Lower leg skin (tissue), 4 donors: ENCODE measurements at regions of chr11 and their contacts with region 1.

Region 1: GRCh38 chr11:83713701-83714100 is 427.5 kb upstream of the CCDC90B start:
- DNase-seq: no peak
- H3K4me3 ChIP-seq: no peak overlapping the region
- CTCF ChIP-seq: no peak
- POLR2A ChIP-seq: no peak

Region 2: GRCh38 chr11:83292709-83293456 is 420.8 kb before region 1 on chr11:
- intact Hi-C with region 1: loop called (anchors 10 kb)
- DNase-seq: no peak
- H3K4me3 ChIP-seq: no peak overlapping the region
- CTCF ChIP-seq: peak in 1 of 3 donors; percentile 23
- POLR2A ChIP-seq: no peak

Region 3: DNA sequence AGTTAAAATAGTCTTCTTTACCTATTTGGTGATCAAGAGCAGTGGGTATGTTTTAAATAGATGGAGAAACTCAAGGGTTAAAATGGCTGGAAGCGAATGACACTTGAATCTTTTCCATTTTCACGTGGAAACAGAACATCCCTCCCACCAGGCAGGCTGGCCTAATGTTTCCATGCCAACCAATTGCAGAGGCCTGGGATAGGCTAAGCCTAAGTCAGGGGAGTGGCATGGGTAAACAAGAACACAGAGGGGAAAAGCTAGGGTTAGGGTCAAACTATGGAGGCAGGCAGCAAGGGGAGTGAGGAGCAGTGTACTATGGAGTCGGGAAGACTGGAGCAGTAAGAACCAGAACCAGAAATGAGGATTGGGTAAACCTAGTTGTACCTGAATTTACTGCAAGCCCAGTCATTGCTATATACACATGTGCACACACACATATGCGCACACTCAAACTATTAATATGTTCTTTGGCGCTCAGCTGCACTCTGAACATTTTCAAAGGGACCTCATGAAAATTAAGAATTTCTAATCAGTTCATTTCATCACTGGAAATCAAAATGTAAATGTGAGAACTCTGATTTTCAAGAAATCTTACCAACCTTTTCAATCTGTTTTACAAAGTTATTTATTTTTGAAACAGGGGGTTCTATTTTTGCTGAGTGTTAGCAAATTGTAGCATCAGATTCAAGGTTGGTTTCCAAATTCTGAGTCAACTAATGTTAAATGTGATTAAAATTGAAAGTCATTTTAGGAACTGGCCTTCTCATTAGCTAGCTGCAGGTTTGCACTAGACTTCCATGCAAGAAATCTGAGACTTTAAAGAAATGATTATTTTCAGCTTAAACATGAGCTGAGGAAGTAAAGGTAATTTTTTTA is 100.6 kb before region 1 on chr11:
- intact Hi-C with region 1: no loop called
- DNase-seq: no peak
- H3K4me3 ChIP-seq: no peak overlapping the region
- CTCF ChIP-seq: no peak
- POLR2A ChIP-seq: no peak

Region 4: DNA sequence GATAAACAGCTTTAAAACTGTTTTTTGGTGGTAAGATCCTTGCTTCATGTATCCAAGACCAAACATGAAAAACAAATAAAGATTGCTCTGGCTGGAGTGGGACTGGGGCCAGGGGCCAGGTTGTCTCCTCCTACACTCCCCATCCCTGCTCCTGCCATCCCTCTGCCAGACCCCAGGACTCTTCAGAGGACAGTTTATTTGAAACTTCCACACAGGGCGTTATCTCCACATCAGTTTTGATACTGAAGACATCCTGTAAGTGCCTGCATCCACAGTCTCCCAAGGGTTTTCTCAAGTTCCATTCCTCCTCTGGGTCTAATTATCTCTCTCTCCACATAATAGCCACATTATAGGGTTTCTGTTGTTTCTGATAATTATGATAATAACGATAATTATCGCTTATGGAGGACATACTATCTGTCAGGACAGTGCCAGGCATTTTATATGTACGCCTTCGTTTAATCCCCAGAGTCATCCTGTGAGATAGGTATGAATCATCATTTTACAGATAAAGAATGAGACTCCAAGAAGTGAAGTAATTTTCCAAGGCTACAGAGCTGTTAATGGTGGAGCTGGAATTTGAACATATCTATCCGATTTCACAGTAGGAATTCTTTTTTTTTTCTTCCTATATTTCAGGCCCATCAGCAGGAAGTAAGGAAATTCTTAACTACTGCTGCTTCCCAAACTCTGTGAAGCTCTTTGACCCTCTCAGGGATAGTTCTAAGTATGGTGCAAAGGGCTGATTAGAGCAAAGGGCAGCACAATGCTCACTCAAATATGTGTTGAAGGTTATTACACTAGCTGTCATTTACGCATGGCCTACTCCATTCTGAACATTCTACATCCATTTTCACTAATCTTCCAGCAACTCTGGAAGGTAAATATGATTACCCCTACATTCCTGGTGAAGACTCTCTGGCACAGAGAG is 60.5 kb after region 1 on chr11:
- intact Hi-C with region 1: no loop called
- DNase-seq: no peak
- H3K4me3 ChIP-seq: no peak overlapping the region
- CTCF ChIP-seq: no peak
- POLR2A ChIP-seq: no peak